ENCODE measurements at regions of chr3 and their contacts with region 1.

Region 1: GRCh38 chr3:101512646-101513418 is at the start of gene SENP7:
- DNase-seq: peak; percentile 92
- ATAC-seq: peak; percentile 85
- H3K4me3 ChIP-seq: peak within 1 kb of the TSS; percentile 70
- H3K27ac ChIP-seq: peak within 1 kb of the TSS; percentile 67
- H3K4me1 ChIP-seq: peaks cover 31% of the 10 kb centered on the region
- H3K27me3 ChIP-seq: no peaks in the 10 kb centered on the region
- CTCF ChIP-seq: no peak
- total RNA-seq, gene SENP7: 4.8 and 5.4 TPM in 2 replicates

Region 2: DNA sequence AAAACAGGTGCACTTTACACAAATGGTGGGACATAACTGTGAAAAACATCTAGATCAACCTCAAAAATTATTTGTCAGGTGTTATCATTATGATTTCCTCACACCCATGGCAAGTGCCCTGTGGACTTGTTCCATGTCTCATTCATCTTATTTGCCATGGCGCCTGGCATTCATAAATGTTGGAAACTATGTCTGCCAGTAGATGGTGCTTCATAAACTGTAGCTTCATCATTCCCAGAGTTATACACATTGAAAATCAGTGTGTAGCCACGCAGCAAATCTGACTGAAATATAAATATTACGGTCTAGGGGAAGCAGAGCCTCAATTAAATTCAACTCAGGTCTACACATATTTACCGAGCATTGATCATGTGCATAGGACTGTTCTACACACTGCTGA is 283.2 kb before region 1 on chr3:
- CTCF ChIA-PET with region 1: no interaction called
- POLR2A ChIA-PET with region 1: no interaction called
- intact Hi-C with region 1: loop called (anchors 1 kb)
- DNase-seq: peak; percentile 50
- ATAC-seq: peak; percentile 83
- H3K4me3 ChIP-seq: no peak overlapping the region
- H3K27ac ChIP-seq: no peak overlapping the region
- H3K4me1 ChIP-seq: no peaks in the 10 kb centered on the region
- H3K27me3 ChIP-seq: no peaks in the 10 kb centered on the region
- CTCF ChIP-seq: peak; percentile 59

Region 3: GRCh38 chr3:101292027-101292426 is 220.8 kb before region 1 on chr3:
- CTCF ChIA-PET with region 1: no interaction called
- POLR2A ChIA-PET with region 1: no interaction called
- intact Hi-C with region 1: loop called (anchors 5 kb)
- DNase-seq: peak; percentile 71
- ATAC-seq: peak; percentile 99
- H3K4me3 ChIP-seq: no peak overlapping the region
- H3K27ac ChIP-seq: peak overlapping the region; percentile 70
- H3K4me1 ChIP-seq: peaks cover 25% of the 10 kb centered on the region
- H3K27me3 ChIP-seq: no peaks in the 10 kb centered on the region
- CTCF ChIP-seq: no peak

Region 4: DNA sequence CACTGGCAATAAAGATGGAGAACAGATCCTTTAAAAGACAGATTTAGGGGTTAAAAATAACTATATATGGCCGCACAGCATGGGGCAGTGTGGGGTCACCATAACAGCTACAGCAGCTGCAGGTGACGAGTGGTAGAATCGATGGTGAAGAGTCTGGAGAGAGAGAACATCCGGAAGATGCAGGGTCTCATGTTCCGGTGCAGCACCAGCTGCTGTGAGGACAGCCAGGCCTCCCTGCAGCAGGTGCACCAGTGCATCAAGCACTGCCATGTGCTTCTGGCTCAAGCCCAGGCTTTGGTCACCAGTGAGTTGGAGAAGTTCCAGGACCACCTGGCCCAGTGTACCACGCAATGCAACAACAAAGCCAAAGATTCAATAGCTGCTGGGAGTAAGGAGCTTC is 98.7 kb before region 1 on chr3:
- CTCF ChIA-PET with region 1: no interaction called
- POLR2A ChIA-PET with region 1: no interaction called
- intact Hi-C with region 1: no loop called
- DNase-seq: no peak
- ATAC-seq: no peak
- H3K4me3 ChIP-seq: no peak overlapping the region
- H3K27ac ChIP-seq: no peak overlapping the region
- H3K4me1 ChIP-seq: no peaks in the 10 kb centered on the region
- H3K27me3 ChIP-seq: no peaks in the 10 kb centered on the region
- CTCF ChIP-seq: no peak

Region 5: DNA sequence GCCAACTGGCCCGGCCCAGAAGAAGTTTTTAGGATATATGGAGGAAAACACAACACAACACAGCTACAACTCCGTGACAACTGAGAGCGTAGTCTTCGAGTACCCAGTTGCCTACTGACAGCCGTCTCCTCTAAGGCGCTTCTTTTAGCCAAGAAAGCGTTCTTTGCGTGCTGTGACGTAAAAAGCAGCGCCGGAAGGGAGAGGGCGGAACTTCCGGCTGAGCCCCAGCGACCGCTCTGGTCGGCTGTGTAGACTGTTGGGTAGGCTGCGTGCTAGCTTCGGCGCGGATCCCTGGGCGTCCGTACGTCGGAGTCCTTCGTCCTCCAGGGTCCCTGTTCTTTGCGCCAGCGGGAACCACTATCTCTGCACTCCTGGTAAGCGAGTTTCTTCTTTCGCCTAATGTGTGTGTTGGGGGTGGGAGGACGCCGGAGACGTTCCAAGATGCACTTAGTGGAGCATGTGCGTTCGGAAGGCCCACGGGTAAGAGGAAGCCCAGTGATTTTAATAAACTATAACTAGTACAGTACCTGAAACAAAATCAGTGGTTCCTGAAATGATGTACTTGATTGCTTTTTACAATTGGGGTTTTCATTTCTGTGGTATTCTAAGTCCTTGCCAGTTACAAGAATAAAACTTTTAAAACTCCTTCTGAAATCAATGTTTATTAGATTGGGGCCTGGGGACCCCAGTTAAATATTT is 48.9 kb after region 1 on chr3 and contains the start of gene TRMT10C:
- CTCF ChIA-PET with region 1: no interaction called
- POLR2A ChIA-PET with region 1: no interaction called
- intact Hi-C with region 1: loop called (anchors 2 kb)
- DNase-seq: peak; percentile 97
- ATAC-seq: peak; percentile 99
- H3K4me3 ChIP-seq: peak within 1 kb of the TSS; percentile 96
- H3K27ac ChIP-seq: peak within 1 kb of the TSS; percentile 40
- H3K4me1 ChIP-seq: peaks cover 15% of the 10 kb centered on the region
- H3K27me3 ChIP-seq: no peaks in the 10 kb centered on the region
- CTCF ChIP-seq: no peak
- total RNA-seq, gene TRMT10C: 31.7 and 35.2 TPM in 2 replicates

Region 6: GRCh38 chr3:101573449-101574387 is 60.9 kb after region 1 on chr3 and contains the start of gene PCNP:
- CTCF ChIA-PET with region 1: no interaction called
- POLR2A ChIA-PET with region 1: no interaction called
- intact Hi-C with region 1: loop called (anchors 2 kb)
- DNase-seq: peak; percentile 99
- ATAC-seq: peak; percentile 82
- H3K4me3 ChIP-seq: peak within 1 kb of the TSS; percentile 95
- H3K27ac ChIP-seq: peak within 1 kb of the TSS; percentile 85
- H3K4me1 ChIP-seq: peaks cover 19% of the 10 kb centered on the region
- H3K27me3 ChIP-seq: no peaks in the 10 kb centered on the region
- CTCF ChIP-seq: peak; percentile 97
- total RNA-seq, gene PCNP: 71.1 and 72.3 TPM in 2 replicates